Activated CD4-positive, alpha-beta memory T cell treated with anti-CD3 and anti-CD28 coated beads, Interleukin-2, amount 10 ng/mL, durations not matched to agents 7 days and 5 days (primary cell): ENCODE measurements at regions of chr5 and their contacts with region 1.

Region 1: GRCh38 chr5:14685757-14686156 is 21.2 kb downstream of the OTULIN start:
- DNase-seq: peak; percentile 42
- H3K4me3 Mint-ChIP-seq: no peak overlapping the region
- H3K27ac Mint-ChIP-seq: peak overlapping the region; percentile 21
- H3K4me1 Mint-ChIP-seq: peaks cover 15% of the 10 kb centered on the region
- H3K27me3 Mint-ChIP-seq: no peaks in the 10 kb centered on the region

Region 2: DNA sequence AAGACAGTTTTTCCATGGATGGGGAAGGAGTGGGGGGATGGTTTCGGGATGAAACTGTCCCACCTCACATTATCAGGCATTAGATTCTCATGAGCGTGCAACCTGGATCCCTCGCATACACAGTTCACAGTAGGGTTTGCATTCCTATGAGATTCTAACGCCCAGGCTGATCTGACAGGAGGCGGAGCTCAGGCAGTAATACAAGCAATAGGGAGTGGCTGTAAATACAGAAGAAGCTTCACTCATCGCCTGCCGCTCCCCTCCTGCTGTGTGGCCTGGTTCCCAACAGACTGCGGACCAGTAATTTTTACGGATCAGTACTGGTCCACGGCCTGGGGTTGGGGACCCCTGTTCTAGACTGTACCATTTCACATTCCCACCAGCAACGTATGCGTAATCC is 172.5 kb before region 1 on chr5:
- CTCF ChIA-PET with region 1: no interaction called
- POLR2A ChIA-PET with region 1: no interaction called
- DNase-seq: no peak
- H3K4me3 Mint-ChIP-seq: no peak overlapping the region
- H3K27ac Mint-ChIP-seq: no peak overlapping the region
- H3K4me1 Mint-ChIP-seq: no peaks in the 10 kb centered on the region
- H3K27me3 Mint-ChIP-seq: peaks cover 2% of the 10 kb centered on the region

Region 3: DNA sequence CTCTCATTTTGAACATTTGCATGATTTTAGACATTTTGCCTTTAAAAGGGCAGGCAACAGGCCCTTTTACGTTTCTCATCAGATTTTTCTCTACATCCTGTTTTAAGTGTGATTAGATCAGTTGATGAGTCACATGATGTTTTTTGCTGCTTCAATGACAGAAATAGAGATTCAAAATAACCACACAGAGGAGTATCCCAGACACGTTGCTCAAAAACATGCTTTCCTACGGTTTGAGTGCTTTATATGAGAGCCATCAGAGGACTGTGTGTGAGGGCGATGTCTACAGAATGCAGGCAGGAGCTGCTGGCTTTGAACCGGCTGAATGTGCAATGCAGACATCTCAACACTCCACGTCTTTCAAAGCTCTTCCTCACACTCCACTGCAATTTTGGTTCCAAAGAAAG is 20.9 kb after region 1 on chr5:
- CTCF ChIA-PET with region 1: interaction called, 24 read pairs
- POLR2A ChIA-PET with region 1: interaction called, 18 read pairs
- DNase-seq: peak; percentile 47
- H3K4me3 Mint-ChIP-seq: peak overlapping the region; percentile 69
- H3K27ac Mint-ChIP-seq: peak overlapping the region; percentile 100
- H3K4me1 Mint-ChIP-seq: peaks cover 80% of the 10 kb centered on the region
- H3K27me3 Mint-ChIP-seq: no peaks in the 10 kb centered on the region